ENCODE measurements at regions of chr12 and their contacts with region 1.

Region 1: DNA sequence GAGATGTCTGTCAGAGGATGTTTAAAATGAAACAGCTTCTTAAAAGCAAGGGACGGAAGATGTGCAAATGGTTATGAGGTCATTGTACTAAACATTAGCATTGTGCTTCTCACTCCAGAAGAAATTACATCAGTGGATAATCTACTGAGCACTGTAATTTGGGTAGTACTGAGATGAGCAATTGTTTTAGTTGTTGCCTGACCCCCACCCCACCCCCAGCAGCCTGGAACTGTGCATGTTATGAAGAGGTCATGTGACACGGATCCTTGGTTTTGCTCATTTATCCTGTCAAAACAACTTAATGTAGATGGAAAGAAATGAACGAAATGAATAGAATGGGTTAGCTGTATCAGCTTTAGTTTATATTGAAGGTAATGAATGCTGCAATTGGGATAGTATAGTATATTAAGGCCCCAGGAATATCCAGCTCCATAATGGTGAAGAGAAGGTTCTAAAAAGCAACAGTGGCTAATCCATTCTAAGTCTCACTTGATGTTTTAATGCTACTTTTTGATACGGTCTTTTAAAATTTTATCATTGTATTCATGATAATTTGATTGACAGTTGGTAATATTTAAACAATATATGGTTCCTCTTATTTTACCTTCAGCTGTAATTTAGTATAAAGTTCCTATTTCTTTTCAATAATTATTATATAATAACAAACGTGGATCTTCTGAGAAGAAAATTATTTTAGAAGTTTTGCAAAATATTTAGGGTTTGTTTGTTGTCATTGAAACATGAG is 58.5 kb downstream of the WNK1 start:
- DNase-seq: no peak
- ATAC-seq: no peak
- H3K4me3 ChIP-seq: no peak overlapping the region
- H3K4me3 Mint-ChIP-seq: no peak overlapping the region
- H3K27ac ChIP-seq: peak overlapping the region in 1 of 2 donors; percentile 53
- H3K27ac Mint-ChIP-seq: peak overlapping the region; percentile 23
- H3K4me1 ChIP-seq: peaks cover 10 to 18% of the 10 kb centered on the region in 2 donors
- H3K4me1 Mint-ChIP-seq: peaks cover 42% of the 10 kb centered on the region
- H3K27me3 ChIP-seq: no peaks in the 10 kb centered on the region
- H3K27me3 Mint-ChIP-seq: no peaks in the 10 kb centered on the region
- CTCF ChIP-seq: no peak

Region 2: GRCh38 chr12:569803-570434 is 240.9 kb before region 1 on chr12:
- CTCF ChIA-PET with region 1: interaction called, 151 read pairs
- POLR2A ChIA-PET with region 1: no interaction called
- intact Hi-C with region 1: loop called (anchors 1 kb)
- DNase-seq: peak; percentile 87
- ATAC-seq: peak; percentile 97
- H3K4me3 ChIP-seq: peak overlapping the region; percentile 21 to 72 (median 53)
- H3K4me3 Mint-ChIP-seq: peak overlapping the region; percentile 91
- H3K27ac ChIP-seq: no peak overlapping the region
- H3K27ac Mint-ChIP-seq: peak overlapping the region; percentile 32
- H3K4me1 ChIP-seq: peaks cover 4 to 14% of the 10 kb centered on the region in 2 donors
- H3K4me1 Mint-ChIP-seq: peaks cover 4% of the 10 kb centered on the region
- H3K27me3 ChIP-seq: no peaks in the 10 kb centered on the region
- H3K27me3 Mint-ChIP-seq: no peaks in the 10 kb centered on the region
- CTCF ChIP-seq: peak; percentile 94

Region 3: DNA sequence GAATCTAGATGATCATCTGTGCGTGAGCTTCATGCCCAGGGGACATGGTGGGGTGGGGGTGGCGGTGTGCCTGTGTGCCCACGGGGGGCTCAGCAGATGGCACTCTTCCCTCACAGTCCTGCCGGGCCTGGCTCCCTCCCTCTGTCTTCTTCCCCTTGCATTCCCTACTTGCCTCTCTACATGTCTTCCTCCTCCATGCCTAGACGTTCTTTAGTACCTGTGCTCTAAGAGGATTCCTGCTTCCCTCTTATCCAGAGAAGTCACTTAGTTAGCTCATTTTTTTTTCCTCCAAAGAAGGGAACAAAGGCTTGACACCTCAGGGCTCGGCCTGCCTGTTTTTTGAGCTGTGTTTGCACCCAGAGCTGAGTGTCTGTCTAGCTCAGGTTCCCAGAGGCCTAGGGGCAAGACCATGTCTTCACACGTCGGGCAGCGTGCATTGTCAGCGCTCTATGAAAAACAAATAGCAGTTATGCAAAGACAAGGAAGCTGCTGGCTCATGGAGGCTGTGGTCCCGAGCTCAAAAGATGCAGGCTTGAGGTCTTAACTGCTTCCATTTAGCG is 196.4 kb before region 1 on chr12:
- CTCF ChIA-PET with region 1: interaction called, 132 read pairs
- POLR2A ChIA-PET with region 1: no interaction called
- intact Hi-C with region 1: loop called (anchors 1 kb)
- DNase-seq: peak; percentile 62
- ATAC-seq: peak; percentile 68
- H3K4me3 ChIP-seq: no peak overlapping the region
- H3K4me3 Mint-ChIP-seq: no peak overlapping the region
- H3K27ac ChIP-seq: no peak overlapping the region
- H3K27ac Mint-ChIP-seq: no peak overlapping the region
- H3K4me1 ChIP-seq: peaks cover 20 to 21% of the 10 kb centered on the region in 2 donors
- H3K4me1 Mint-ChIP-seq: peaks cover 24% of the 10 kb centered on the region
- H3K27me3 ChIP-seq: no peaks in the 10 kb centered on the region
- H3K27me3 Mint-ChIP-seq: no peaks in the 10 kb centered on the region
- CTCF ChIP-seq: peak; percentile 45

Region 4: GRCh38 chr12:650983-651382 is 159.9 kb before region 1 on chr12:
- CTCF ChIA-PET with region 1: interaction called, 12 read pairs
- POLR2A ChIA-PET with region 1: no interaction called
- intact Hi-C with region 1: no loop called
- DNase-seq: no peak
- ATAC-seq: no peak
- H3K4me3 ChIP-seq: no peak overlapping the region
- H3K4me3 Mint-ChIP-seq: no peak overlapping the region
- H3K27ac ChIP-seq: no peak overlapping the region
- H3K27ac Mint-ChIP-seq: no peak overlapping the region
- H3K4me1 ChIP-seq: peaks cover 23 to 30% of the 10 kb centered on the region in 2 donors
- H3K4me1 Mint-ChIP-seq: peaks cover 30% of the 10 kb centered on the region
- H3K27me3 ChIP-seq: no peaks in the 10 kb centered on the region
- H3K27me3 Mint-ChIP-seq: no peaks in the 10 kb centered on the region
- CTCF ChIP-seq: no peak

Region 5: DNA sequence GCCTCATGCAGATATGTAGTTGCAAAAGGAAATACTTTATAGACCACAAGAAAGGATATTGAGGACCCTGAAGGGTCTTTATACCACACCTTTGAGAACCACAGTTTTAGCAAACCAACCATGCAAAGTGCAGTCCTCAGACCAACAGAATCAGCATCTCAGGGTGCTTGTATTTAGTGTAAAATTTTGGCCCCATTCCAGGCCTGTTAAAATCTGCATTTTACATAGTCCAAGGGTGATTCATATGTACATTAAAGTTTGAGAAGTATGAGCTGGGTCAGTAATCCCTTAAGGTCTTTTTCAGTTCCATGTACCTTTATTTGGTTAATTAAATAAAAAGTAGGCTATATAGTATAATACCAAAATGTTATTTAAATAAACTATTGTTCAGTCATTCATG is 32.8 kb after region 1 on chr12:
- CTCF ChIA-PET with region 1: interaction called, 10 read pairs
- POLR2A ChIA-PET with region 1: no interaction called
- intact Hi-C with region 1: no loop called
- DNase-seq: no peak
- ATAC-seq: no peak
- H3K4me3 ChIP-seq: no peak overlapping the region
- H3K4me3 Mint-ChIP-seq: no peak overlapping the region
- H3K27ac ChIP-seq: no peak overlapping the region
- H3K27ac Mint-ChIP-seq: no peak overlapping the region
- H3K4me1 ChIP-seq: no peaks in the 10 kb centered on the region
- H3K4me1 Mint-ChIP-seq: peaks cover 17% of the 10 kb centered on the region
- H3K27me3 ChIP-seq: no peaks in the 10 kb centered on the region
- H3K27me3 Mint-ChIP-seq: no peaks in the 10 kb centered on the region
- CTCF ChIP-seq: no peak

Region 6: GRCh38 chr12:873954-874353 is 63.1 kb after region 1 on chr12:
- CTCF ChIA-PET with region 1: interaction called, 19 read pairs
- POLR2A ChIA-PET with region 1: no interaction called
- intact Hi-C with region 1: loop called (anchors 10 kb)
- DNase-seq: no peak
- ATAC-seq: no peak
- H3K4me3 ChIP-seq: no peak overlapping the region
- H3K4me3 Mint-ChIP-seq: no peak overlapping the region
- H3K27ac ChIP-seq: no peak overlapping the region
- H3K27ac Mint-ChIP-seq: no peak overlapping the region
- H3K4me1 ChIP-seq: no peaks in the 10 kb centered on the region
- H3K4me1 Mint-ChIP-seq: no peaks in the 10 kb centered on the region
- H3K27me3 ChIP-seq: no peaks in the 10 kb centered on the region
- H3K27me3 Mint-ChIP-seq: no peaks in the 10 kb centered on the region
- CTCF ChIP-seq: no peak

Region 7: GRCh38 chr12:1071182-1071581 is 260.3 kb after region 1 on chr12:
- CTCF ChIA-PET with region 1: no interaction called
- POLR2A ChIA-PET with region 1: no interaction called
- intact Hi-C with region 1: no loop called
- DNase-seq: no peak
- ATAC-seq: no peak
- H3K4me3 ChIP-seq: no peak overlapping the region
- H3K4me3 Mint-ChIP-seq: no peak overlapping the region
- H3K27ac ChIP-seq: no peak overlapping the region
- H3K27ac Mint-ChIP-seq: no peak overlapping the region
- H3K4me1 ChIP-seq: no peaks in the 10 kb centered on the region
- H3K4me1 Mint-ChIP-seq: peaks cover 9% of the 10 kb centered on the region
- H3K27me3 ChIP-seq: no peaks in the 10 kb centered on the region
- H3K27me3 Mint-ChIP-seq: no peaks in the 10 kb centered on the region
- CTCF ChIP-seq: no peak

Region 8: GRCh38 chr12:1583421-1584078 is 772.7 kb after region 1 on chr12:
- CTCF ChIA-PET with region 1: interaction called, 27 read pairs
- POLR2A ChIA-PET with region 1: no interaction called
- intact Hi-C with region 1: loop called (anchors 1 kb)
- DNase-seq: peak; percentile 86
- ATAC-seq: peak; percentile 93
- H3K4me3 ChIP-seq: peak overlapping the region in 2 of 5 experiments; percentile 12 to 28
- H3K4me3 Mint-ChIP-seq: peak overlapping the region; percentile 79
- H3K27ac ChIP-seq: no peak overlapping the region
- H3K27ac Mint-ChIP-seq: no peak overlapping the region
- H3K4me1 ChIP-seq: peaks cover 6 to 7% of the 10 kb centered on the region in 2 donors
- H3K4me1 Mint-ChIP-seq: peaks cover 19% of the 10 kb centered on the region
- H3K27me3 ChIP-seq: no peaks in the 10 kb centered on the region
- H3K27me3 Mint-ChIP-seq: no peaks in the 10 kb centered on the region
- CTCF ChIP-seq: peak; percentile 92